Endothelial cell of umbilical vein (primary cell): ENCODE measurements at regions of chr20 and their contacts with region 1.

Region 1: GRCh38 chr20:48329635-48330277 is 498.0 kb downstream of the PREX1 start:
- DNase-seq: peak; percentile 38
- H3K4me3 ChIP-seq: no peak overlapping the region
- H3K27ac ChIP-seq: no peak overlapping the region
- H3K4me1 ChIP-seq: no peaks in the 10 kb centered on the region
- H3K27me3 ChIP-seq: peaks cover 9 to 13% of the 10 kb centered on the region in 2 experiments
- CTCF ChIP-seq: peak; percentile 47 to 72
- POLR2A ChIP-seq: no peak

Region 2: DNA sequence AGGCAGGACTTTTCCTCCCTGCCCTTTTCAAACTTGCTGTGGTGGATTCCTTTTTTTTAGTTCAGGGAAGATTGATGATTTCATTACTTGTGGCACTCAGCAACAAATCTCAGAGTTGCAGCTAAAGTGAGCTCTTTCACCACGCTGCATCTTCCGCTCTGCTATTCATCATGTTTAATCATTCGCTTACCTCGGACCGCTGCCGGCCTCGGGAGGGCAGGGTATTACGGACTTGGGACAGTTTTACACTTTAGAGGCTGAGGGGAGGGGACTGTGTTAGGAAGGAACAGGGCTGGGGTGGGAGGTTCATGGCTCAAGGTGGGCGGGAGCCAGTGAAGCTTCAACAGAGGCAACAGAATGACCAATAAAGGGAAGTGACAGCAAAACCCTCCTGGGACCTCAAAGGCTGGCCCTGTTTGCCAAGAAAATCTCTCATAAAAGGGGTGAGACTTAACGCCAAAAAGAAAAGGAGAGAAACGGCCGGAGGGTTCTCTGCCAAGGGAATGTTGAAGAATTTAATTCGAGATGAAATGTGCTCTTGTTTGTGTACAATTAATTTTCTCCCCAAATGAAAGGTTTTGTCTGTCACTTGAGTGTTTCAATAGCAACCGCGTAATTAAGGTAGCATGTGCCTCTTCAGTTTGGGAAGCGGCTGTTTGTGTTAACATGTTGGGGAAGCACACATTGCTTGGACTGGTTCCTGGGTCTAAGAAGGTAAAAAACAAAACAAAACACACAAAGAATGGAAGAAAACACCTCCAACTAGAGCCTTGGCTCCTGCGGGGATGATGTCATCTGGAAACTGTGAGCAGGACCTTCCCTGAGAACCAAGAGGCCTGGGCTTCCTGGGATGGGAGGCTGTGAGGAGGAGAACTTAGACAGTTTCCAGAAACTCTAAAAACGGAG is 471.9 kb before region 1 on chr20:
- CTCF ChIA-PET with region 1: interaction called, 22 read pairs
- POLR2A ChIA-PET with region 1: no interaction called
- dilution Hi-C with region 1: no loop called
- intact Hi-C with region 1: no loop called
- DNase-seq: peak; percentile 38
- H3K4me3 ChIP-seq: no peak overlapping the region
- H3K27ac ChIP-seq: no peak overlapping the region
- H3K4me1 ChIP-seq: no peaks in the 10 kb centered on the region
- H3K27me3 ChIP-seq: peaks cover 0 to 9% of the 10 kb centered on the region in 2 experiments
- CTCF ChIP-seq: no peak
- POLR2A ChIP-seq: no peak

Region 3: GRCh38 chr20:48159160-48160028 is 170.4 kb before region 1 on chr20:
- CTCF ChIA-PET with region 1: no interaction called
- POLR2A ChIA-PET with region 1: no interaction called
- dilution Hi-C with region 1: no loop called
- intact Hi-C with region 1: loop called (anchors 10 kb)
- DNase-seq: no peak
- H3K4me3 ChIP-seq: no peak overlapping the region
- H3K27ac ChIP-seq: no peak overlapping the region
- H3K4me1 ChIP-seq: no peaks in the 10 kb centered on the region
- H3K27me3 ChIP-seq: no peaks in the 10 kb centered on the region
- CTCF ChIP-seq: no peak
- POLR2A ChIP-seq: no peak

Region 4: GRCh38 chr20:48679550-48680187 is 349.9 kb after region 1 on chr20:
- CTCF ChIA-PET with region 1: no interaction called
- POLR2A ChIA-PET with region 1: no interaction called
- dilution Hi-C with region 1: no loop called
- intact Hi-C with region 1: no loop called
- DNase-seq: no peak
- H3K4me3 ChIP-seq: no peak overlapping the region
- H3K27ac ChIP-seq: no peak overlapping the region
- H3K4me1 ChIP-seq: peaks cover 28% of the 10 kb centered on the region
- H3K27me3 ChIP-seq: no peaks in the 10 kb centered on the region
- CTCF ChIP-seq: no peak
- POLR2A ChIP-seq: no peak